PC-3 (cell line): ENCODE measurements at regions of chr3 and their contacts with region 1.

Region 1: GRCh38 chr3:160027541-160028195 is 39.0 kb downstream of the IL12A start:
- DNase-seq: peak; percentile 82
- ATAC-seq: peak; percentile 74
- H3K4me3 ChIP-seq: no peak overlapping the region
- H3K27ac ChIP-seq: peak overlapping the region; percentile 76
- H3K4me1 ChIP-seq: peaks cover 37% of the 10 kb centered on the region
- H3K27me3 ChIP-seq: no peaks in the 10 kb centered on the region
- CTCF ChIP-seq: no peak

Region 2: GRCh38 chr3:159458010-159458409 is 569.7 kb before region 1 on chr3:
- CTCF ChIA-PET with region 1: interaction called, 10 read pairs
- POLR2A ChIA-PET with region 1: no interaction called
- intact Hi-C with region 1: no loop called
- DNase-seq: peak; percentile 98
- ATAC-seq: peak; percentile 99
- H3K4me3 ChIP-seq: no peak overlapping the region
- H3K27ac ChIP-seq: peak overlapping the region; percentile 50
- H3K4me1 ChIP-seq: peaks cover 22% of the 10 kb centered on the region
- H3K27me3 ChIP-seq: no peaks in the 10 kb centered on the region
- CTCF ChIP-seq: no peak

Region 3: DNA sequence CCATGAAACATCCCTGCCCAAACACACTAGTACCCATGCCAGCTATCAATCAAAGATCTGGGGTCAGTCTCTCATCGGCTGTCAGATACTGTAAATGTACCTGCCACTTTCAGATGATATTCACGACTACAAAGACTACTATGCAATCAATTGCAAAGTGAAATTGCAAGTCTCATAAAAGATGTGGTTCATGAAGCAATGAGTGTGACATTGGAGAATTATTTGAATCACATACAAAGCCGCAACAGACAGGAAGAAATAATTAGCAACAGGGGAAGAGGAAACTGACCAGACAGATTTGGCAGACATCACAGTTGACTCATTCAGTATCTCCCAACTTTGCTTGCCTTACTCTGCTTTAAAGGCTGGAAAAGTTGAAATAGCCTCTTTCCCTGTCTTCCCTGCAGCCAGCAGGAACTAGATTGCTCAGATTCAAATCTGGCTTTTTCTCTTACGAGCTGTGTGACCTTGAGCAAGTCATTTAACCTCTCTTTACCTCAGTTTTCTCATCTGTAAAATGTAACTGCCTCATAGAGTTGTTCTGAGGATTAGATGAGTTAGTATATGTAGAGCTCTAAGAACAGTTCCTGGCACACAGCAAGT is 101.9 kb after region 1 on chr3:
- CTCF ChIA-PET with region 1: interaction called, 4 read pairs
- POLR2A ChIA-PET with region 1: no interaction called
- intact Hi-C with region 1: loop called (anchors 1 kb)
- DNase-seq: peak; percentile 89
- ATAC-seq: peak; percentile 91
- H3K4me3 ChIP-seq: no peak overlapping the region
- H3K27ac ChIP-seq: peak overlapping the region; percentile 19
- H3K4me1 ChIP-seq: peaks cover 22% of the 10 kb centered on the region
- H3K27me3 ChIP-seq: no peaks in the 10 kb centered on the region
- CTCF ChIP-seq: no peak

Region 4: GRCh38 chr3:160163229-160163878 is 135.7 kb after region 1 on chr3:
- CTCF ChIA-PET with region 1: interaction called, 11 read pairs
- POLR2A ChIA-PET with region 1: no interaction called
- intact Hi-C with region 1: loop called (anchors 2 kb)
- DNase-seq: peak; percentile 46
- ATAC-seq: peak; percentile 54; the same call in 1 of the 2 replicates
- H3K4me3 ChIP-seq: no peak overlapping the region
- H3K27ac ChIP-seq: no peak overlapping the region
- H3K4me1 ChIP-seq: peaks cover 2% of the 10 kb centered on the region; the same call in 1 of the 2 replicates
- H3K27me3 ChIP-seq: no peaks in the 10 kb centered on the region
- CTCF ChIP-seq: peak; percentile 78

Region 5: DNA sequence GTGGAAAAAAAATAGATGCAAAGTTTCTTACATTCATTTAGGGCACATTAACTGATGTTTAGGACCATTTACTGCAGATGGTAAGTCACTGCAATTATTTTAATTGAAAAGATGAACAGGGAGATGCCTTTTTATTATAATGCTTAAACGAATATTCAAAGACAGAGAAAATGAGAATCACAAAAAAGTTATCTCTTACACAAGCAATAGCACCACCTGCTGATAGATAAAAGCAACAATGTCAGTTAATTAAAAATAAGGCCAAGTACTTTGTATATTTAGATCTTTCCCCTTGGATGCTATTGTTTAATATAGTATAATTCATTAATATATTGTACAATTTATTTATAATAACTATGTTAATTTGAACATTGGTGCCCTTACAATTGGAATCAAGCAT is 315.5 kb after region 1 on chr3:
- CTCF ChIA-PET with region 1: interaction called, 3 read pairs
- POLR2A ChIA-PET with region 1: no interaction called
- intact Hi-C with region 1: loop called (anchors 1 kb)
- DNase-seq: peak; percentile 42
- ATAC-seq: no peak
- H3K4me3 ChIP-seq: no peak overlapping the region
- H3K27ac ChIP-seq: no peak overlapping the region
- H3K4me1 ChIP-seq: no peaks in the 10 kb centered on the region
- H3K27me3 ChIP-seq: no peaks in the 10 kb centered on the region
- CTCF ChIP-seq: peak; percentile 60

Region 6: DNA sequence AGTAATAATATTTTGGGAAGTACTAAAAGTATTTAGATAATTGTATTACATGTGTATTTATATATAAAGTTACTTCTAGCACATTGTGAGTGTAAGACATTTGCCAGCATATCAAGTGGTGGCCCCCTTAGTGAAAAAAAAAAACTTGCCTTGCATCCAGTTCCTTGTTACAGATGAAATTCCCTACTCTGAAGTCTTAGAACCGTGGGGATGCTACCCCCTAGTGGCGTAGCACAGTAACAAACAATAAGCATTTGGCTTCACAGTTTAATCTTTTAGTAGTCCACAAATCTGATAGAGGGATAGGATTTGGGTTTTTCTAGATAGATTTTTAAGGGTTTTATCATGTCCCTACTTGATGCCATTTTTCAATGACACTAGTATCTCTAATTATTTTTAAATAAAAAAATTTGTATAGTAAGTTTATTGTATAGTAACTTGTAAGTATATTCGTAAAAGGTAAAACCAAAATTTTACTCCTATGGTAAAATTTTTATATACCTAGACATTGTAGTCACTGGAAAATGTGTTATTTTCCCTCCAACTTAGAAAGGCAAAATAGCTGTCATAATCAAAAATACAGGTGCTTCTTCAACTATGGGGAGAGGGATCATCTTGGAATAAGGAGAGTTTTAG is 386.1 kb after region 1 on chr3:
- CTCF ChIA-PET with region 1: interaction called, 6 read pairs
- POLR2A ChIA-PET with region 1: no interaction called
- intact Hi-C with region 1: loop called (anchors 1 kb)
- DNase-seq: peak; percentile 83
- ATAC-seq: peak; percentile 80
- H3K4me3 ChIP-seq: no peak overlapping the region
- H3K27ac ChIP-seq: no peak overlapping the region
- H3K4me1 ChIP-seq: no peaks in the 10 kb centered on the region
- H3K27me3 ChIP-seq: no peaks in the 10 kb centered on the region
- CTCF ChIP-seq: peak; percentile 89